Transverse colon (tissue), 4 donors: ENCODE measurements at regions of chr12 and their contacts with region 1.

Region 1: DNA sequence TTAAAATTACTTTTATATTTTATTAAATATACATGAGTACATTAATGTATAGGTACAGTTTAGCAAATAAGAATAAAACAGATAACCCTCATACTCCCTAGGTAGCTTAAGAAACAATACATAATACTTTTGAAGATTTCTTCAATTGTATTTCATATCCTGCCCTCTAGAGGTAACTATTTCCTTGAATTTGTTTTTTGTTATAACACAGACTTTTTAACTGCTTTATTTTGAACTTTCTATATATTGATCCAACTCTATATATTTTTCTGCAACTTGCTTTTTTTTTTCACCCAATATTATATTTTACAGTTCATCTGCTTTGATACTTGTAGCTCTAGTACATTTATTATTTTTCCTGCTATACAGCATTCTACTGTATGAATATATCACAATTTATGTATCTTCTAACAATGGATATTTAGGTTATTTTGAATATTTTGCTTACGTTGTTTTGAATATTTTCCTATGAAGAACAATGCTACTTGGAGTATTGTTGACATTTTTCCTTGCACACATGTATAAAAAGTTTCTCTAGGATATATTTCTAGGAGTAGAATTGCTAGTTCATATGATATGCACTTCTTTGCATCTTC is 72.8 kb upstream of the ABCD2 start:
- DNase-seq: no peak
- H3K4me3 ChIP-seq: no peak overlapping the region
- H3K27ac ChIP-seq: no peak overlapping the region
- H3K4me1 ChIP-seq: no peaks in the 10 kb centered on the region
- H3K27me3 ChIP-seq: no peaks in the 10 kb centered on the region
- CTCF ChIP-seq: peak in 4 of 5 experiments; percentile 30 to 35 (median 32)
- EP300 ChIP-seq: no peak
- POLR2A ChIP-seq: no peak

Region 2: DNA sequence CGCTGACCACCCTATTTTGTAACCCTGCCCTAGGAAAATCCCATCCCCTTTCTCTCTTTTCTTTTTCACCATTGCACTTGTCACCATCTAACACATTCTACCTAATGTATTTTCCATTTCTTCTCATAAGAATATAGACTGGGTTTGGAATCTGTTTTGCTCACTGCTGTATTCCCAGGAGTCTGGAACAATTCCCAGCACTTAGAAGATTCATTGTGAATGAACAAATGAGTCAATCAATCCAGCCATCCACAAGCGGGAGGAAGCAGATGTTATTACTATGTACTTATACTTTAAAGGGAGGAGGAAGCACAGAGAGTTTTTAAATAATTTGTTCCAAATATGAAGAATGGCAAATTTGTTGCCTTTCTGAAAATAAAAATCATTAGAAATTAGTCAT is 391.6 kb before region 1 on chr12:
- in situ Hi-C with region 1: loop called in 2 of 4 experiments (anchors 25 kb)
- intact Hi-C with region 1: no loop called
- DNase-seq: no peak
- H3K4me3 ChIP-seq: no peak overlapping the region
- H3K27ac ChIP-seq: no peak overlapping the region
- H3K4me1 ChIP-seq: no peaks in the 10 kb centered on the region
- H3K27me3 ChIP-seq: no peaks in the 10 kb centered on the region
- CTCF ChIP-seq: no peak
- EP300 ChIP-seq: no peak
- POLR2A ChIP-seq: no peak

Region 3: DNA sequence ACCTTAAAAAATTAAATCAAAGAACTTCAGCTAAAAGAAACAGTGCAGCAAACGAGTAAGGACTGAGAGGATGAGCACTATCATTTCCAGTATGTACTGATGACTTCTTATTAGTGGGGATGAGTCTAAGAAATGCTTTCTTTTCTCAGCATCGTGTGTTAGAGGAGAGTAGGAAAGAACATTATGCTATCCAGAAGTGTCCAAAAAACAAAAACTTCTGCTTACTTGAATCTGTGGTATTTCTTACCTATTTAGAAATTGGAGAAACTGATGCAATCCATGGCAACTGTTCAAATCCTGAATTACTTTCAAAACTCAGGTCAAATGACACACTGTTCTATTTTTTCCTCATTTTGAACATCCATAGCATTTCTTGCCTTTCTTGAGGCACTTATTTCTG is 96.4 kb before region 1 on chr12:
- in situ Hi-C with region 1: loop called in 1 of 4 experiments (anchors 10 kb)
- intact Hi-C with region 1: no loop called
- DNase-seq: no peak
- H3K4me3 ChIP-seq: no peak overlapping the region
- H3K27ac ChIP-seq: no peak overlapping the region
- H3K4me1 ChIP-seq: no peaks in the 10 kb centered on the region
- H3K27me3 ChIP-seq: no peaks in the 10 kb centered on the region
- CTCF ChIP-seq: no peak
- EP300 ChIP-seq: no peak
- POLR2A ChIP-seq: no peak